GM10248 (cell line): ENCODE measurements at regions of chr11 and their contacts with region 1.

Region 1: GRCh38 chr11:122853971-122854446 is 15.7 kb downstream of the CRTAM start:
- DNase-seq: peak; percentile 56
- CTCF ChIP-seq: peak; percentile 62

Region 2: GRCh38 chr11:122637541-122637940 is 216.5 kb before region 1 on chr11:
- CTCF ChIA-PET with region 1: interaction called, 15 read pairs
- POLR2A ChIA-PET with region 1: no interaction called
- DNase-seq: no peak
- CTCF ChIP-seq: no peak

Region 3: DNA sequence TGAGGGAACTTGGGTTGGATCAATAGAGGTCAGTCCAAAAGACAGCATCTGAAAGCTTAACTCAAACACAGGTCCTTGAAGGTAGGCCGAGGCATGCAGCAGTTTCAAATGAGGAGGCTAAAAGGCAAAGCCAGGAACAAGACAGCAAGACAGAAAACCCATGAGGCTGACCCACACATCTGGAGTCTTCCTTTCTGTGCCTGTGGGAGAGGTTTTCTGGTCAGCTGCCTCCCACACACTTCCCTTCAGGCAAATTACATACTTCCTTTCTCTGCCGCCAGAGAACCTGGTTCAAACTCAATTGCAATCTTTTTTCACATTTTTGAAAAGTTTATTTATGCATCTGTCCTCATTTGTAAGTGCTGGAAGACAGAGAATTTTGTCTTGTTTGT is 45.5 kb before region 1 on chr11:
- CTCF ChIA-PET with region 1: interaction called, 38 read pairs
- POLR2A ChIA-PET with region 1: no interaction called
- DNase-seq: peak; percentile 58
- CTCF ChIP-seq: no peak

Region 4: DNA sequence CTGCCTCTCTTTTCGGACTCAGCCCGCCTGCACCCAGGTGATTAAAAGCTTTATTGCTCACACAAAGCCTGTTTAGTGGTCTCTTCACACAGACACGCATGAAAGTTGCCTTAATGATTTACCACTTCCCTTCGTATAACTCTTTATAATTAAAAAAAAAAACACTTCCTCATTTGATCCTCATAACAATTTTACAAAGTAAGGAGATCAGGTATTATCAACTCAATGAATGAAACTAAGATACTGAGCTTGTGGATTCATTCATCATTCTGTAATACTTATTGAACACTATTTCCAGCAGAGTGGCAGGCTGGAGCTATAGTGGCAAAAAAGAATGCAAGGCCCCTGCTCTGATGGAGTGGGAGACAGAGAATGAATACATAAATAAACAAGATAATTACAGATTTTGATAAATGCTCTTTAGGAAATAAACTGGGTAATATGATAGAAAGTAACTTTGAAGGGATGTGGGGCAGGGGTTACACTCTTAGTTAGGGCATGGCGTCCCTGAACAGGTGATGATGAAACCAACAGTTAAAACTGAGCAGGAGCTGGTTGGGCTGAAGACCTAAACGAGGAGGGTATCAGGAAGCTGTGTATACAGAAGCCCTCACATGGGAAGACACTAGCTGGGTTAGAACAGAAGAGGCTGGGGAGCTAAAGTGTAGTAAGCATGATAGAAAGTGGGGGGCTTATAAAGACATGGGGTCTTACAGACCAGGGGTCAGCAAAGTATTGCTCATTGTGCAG is 21.1 kb before region 1 on chr11:
- CTCF ChIA-PET with region 1: interaction called, 39 read pairs
- POLR2A ChIA-PET with region 1: no interaction called
- DNase-seq: no peak
- CTCF ChIP-seq: no peak

Region 5: DNA sequence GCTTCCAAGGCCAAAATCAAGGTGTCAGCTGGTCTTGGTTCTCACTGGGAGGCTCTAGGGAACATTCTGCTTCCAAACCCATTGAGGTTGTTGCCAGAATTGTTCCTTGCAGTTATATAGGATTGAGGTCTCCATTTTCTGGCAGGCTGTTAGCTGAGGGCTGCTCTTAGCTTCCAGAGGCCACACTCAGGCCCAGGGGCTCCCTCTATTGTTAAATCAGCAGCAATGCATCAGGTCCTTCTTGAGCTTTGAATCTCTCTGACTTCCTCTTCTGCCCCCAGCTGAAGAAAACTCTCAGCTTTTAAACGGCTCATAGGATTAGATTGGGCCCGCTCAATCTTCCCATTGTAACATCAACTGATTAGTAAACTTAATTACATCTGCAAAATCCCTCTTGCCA is 167.0 kb after region 1 on chr11:
- CTCF ChIA-PET with region 1: interaction called, 257 read pairs
- POLR2A ChIA-PET with region 1: interaction called, 9 read pairs
- DNase-seq: peak; percentile 77
- CTCF ChIP-seq: peak; percentile 71